Ascending aorta (tissue), 2 donors: ENCODE measurements at regions of chr19 and their contacts with region 1.

Region 1: GRCh38 chr19:44657211-44657921 is 13.7 kb downstream of the PVR start:
- DNase-seq: peak in 1 of 2 donors; percentile 78
- H3K4me3 ChIP-seq: no peak overlapping the region
- H3K27ac ChIP-seq: no peak overlapping the region
- H3K4me1 ChIP-seq: no peaks in the 10 kb centered on the region
- H3K27me3 ChIP-seq: no peaks in the 10 kb centered on the region
- CTCF ChIP-seq: peak; percentile 71 to 92 (median 88)

Region 2: GRCh38 chr19:44570984-44571684 is 86.2 kb before region 1 on chr19:
- intact Hi-C with region 1: loop called (anchors 1 kb)
- DNase-seq: peak in 1 of 2 donors; percentile 77
- H3K4me3 ChIP-seq: no peak overlapping the region
- H3K27ac ChIP-seq: no peak overlapping the region
- H3K4me1 ChIP-seq: no peaks in the 10 kb centered on the region
- H3K27me3 ChIP-seq: no peaks in the 10 kb centered on the region
- CTCF ChIP-seq: peak; percentile 54 to 68 (median 62)

Region 3: GRCh38 chr19:44587963-44588770 is 69.2 kb before region 1 on chr19:
- intact Hi-C with region 1: loop called (anchors 5 kb)
- DNase-seq: no peak
- H3K4me3 ChIP-seq: no peak overlapping the region
- H3K27ac ChIP-seq: no peak overlapping the region
- H3K4me1 ChIP-seq: no peaks in the 10 kb centered on the region
- H3K27me3 ChIP-seq: no peaks in the 10 kb centered on the region
- CTCF ChIP-seq: peak in 1 of 3 experiments; percentile 7